ENCODE measurements at regions of chr4 and their contacts with region 1.

Region 1: DNA sequence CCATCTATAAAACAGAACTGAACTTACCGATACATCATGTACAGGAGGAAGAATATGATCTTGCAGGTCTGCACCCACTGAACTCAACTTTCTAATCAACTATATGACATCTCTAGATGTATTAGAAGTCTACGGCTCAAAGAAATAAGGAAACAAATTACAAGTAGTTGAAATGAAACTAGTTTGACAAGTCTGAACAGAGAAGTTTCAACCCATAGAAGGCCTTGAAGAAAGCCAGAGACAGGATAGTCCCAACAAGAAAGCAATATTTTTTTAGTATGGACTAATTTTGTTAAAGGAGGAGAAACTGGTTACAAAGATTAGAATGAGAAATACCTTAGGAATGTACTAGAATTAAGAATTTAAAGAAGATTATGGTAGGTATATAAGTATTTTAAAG is at the start of gene TMPRSS11A:
- DNase-seq: no peak
- ATAC-seq: no peak
- H3K4me3 ChIP-seq: no peak within 1 kb of the TSS
- H3K27ac ChIP-seq: no peak within 1 kb of the TSS
- H3K4me1 ChIP-seq: no peaks in the 10 kb centered on the region
- H3K27me3 ChIP-seq: no peaks in the 10 kb centered on the region
- total RNA-seq, gene TMPRSS11A: not detected

Region 2: GRCh38 chr4:67762086-67762485 is 201.3 kb before region 1 on chr4:
- intact Hi-C with region 1: no loop called
- DNase-seq: no peak
- ATAC-seq: no peak
- H3K4me3 ChIP-seq: no peak overlapping the region
- H3K27ac ChIP-seq: no peak overlapping the region
- H3K4me1 ChIP-seq: peaks cover 0 to 4% of the 10 kb centered on the region in 2 donors
- H3K27me3 ChIP-seq: no peaks in the 10 kb centered on the region

Region 3: GRCh38 chr4:67785528-67785927 is 177.8 kb before region 1 on chr4:
- intact Hi-C with region 1: no loop called
- DNase-seq: no peak
- ATAC-seq: no peak
- H3K4me3 ChIP-seq: no peak overlapping the region
- H3K27ac ChIP-seq: no peak overlapping the region
- H3K4me1 ChIP-seq: no peaks in the 10 kb centered on the region
- H3K27me3 ChIP-seq: no peaks in the 10 kb centered on the region

Region 4: DNA sequence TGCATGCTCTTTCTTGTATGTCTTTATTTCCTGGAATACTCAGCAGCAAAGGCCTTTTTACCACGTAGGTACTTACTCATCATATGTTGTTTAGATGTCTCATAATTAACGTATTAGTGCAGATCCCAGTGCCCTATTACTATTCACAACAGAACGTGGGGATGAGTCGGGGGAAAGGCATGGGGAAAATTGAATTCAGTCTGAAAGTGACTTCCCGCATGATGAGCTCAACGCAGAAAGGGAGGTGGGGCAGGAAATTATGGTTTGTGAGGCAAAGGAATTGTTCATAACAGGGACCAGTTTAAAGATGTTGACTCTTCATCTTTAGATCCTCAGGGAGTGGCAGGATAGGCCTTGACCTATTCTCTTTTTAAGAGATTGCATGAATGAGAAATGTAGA is 77.6 kb before region 1 on chr4:
- intact Hi-C with region 1: no loop called
- DNase-seq: no peak
- ATAC-seq: no peak
- H3K4me3 ChIP-seq: no peak overlapping the region
- H3K27ac ChIP-seq: no peak overlapping the region
- H3K4me1 ChIP-seq: no peaks in the 10 kb centered on the region
- H3K27me3 ChIP-seq: no peaks in the 10 kb centered on the region

Region 5: DNA sequence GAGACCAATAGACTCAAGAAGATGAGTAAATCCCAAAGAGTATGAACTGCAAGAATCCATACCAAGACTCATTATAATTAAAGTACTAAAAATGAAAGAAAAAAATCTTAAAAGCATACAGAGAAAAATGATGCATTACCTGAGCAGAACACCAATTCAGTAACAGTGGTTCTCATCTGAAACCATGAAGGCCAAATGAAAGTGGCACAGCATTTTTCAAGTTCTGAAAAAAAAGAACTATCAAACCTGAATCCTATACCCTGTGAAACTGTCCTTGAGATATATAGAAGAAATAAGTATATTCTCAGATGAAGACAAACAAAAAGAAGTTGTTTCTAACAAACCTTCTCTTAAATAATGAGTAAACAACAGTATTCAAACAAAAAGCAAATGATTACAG is 39.5 kb after region 1 on chr4:
- intact Hi-C with region 1: loop called in 1 of 2 experiments (anchors 2 kb)
- DNase-seq: no peak
- ATAC-seq: no peak
- H3K4me3 ChIP-seq: no peak overlapping the region
- H3K27ac ChIP-seq: no peak overlapping the region
- H3K4me1 ChIP-seq: no peaks in the 10 kb centered on the region
- H3K27me3 ChIP-seq: no peaks in the 10 kb centered on the region

Region 6: DNA sequence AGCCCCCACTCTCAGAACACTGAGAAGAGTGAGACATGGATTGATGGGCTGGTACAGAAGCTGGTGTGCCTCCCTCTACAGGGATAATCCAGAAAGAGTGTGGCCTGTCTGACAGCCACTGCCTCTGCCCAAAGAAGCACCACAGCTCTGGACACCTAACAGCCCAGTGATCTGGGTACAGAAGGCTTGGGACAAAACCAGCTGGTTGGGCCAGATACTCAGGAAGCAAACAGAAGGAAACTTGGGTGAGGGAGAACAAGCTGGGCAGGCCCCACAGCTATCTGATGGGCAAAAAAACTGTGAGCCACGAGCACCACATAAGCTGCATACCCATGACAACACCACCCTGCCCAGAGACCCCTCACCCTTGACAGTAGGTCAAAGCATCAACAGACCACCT is 119.4 kb after region 1 on chr4:
- intact Hi-C with region 1: no loop called
- DNase-seq: no peak
- ATAC-seq: peak; percentile 11
- H3K4me3 ChIP-seq: no peak overlapping the region
- H3K27ac ChIP-seq: no peak overlapping the region
- H3K4me1 ChIP-seq: no peaks in the 10 kb centered on the region
- H3K27me3 ChIP-seq: no peaks in the 10 kb centered on the region